T-cell (primary cell): ENCODE measurements at regions of chr12 and their contacts with region 1.

Region 1: GRCh38 chr12:92593734-92594402 is 108.9 kb upstream of the PLEKHG7 start:
- DNase-seq: peak; percentile 40 to 95 (median 82)
- ATAC-seq: peak; percentile 92 to 94 (median 92)
- H3K4me3 ChIP-seq: peak overlapping the region in 1 of 2 donors; percentile 5
- H3K4me3 Mint-ChIP-seq: peak overlapping the region; percentile 37 to 42 (median 40)
- H3K27ac ChIP-seq: peak overlapping the region; percentile 98
- H3K27ac Mint-ChIP-seq: peak overlapping the region; percentile 97 to 99
- H3K4me1 ChIP-seq: peaks cover 4 to 27% of the 10 kb centered on the region in 2 experiments
- H3K4me1 Mint-ChIP-seq: peaks cover 41 to 81% (median 76%) of the 10 kb centered on the region in 3 donors
- H3K27me3 ChIP-seq: no peaks in the 10 kb centered on the region
- H3K27me3 Mint-ChIP-seq: no peaks in the 10 kb centered on the region

Region 2: DNA sequence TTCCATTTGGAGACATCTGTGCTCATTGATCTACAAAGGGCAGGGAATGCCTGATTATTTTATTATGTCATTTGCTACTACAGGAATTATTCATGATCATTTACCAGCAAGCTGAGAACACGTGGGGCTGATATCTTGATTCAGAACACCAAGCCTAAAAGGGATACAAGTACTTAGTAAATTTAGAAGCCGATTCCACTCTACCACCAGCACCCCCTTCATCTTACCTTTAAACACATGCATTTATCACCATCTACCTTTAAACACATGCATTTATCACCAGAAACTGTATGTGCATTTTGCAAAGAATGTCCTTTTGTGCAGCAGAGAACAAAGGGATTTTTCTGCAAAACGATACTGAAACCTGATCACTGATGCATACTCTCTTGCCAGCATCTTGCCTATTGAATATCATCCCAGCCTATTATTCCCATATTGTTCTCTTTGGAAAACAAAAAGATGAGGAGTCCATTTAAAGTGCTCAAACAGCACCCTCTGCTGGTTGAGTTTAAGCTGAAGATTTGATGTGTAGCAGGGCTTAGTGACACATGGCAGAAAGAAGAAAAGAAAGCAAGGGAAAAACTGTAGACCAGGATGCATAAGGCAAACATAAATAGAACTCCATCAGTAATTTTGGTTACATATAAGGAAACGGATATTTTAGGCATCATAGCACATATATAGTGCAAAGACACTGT is 23.7 kb before region 1 on chr12:
- CTCF ChIA-PET with region 1: interaction called in 1 of 2 experiments, 14 read pairs
- POLR2A ChIA-PET with region 1: interaction called, 3 to 4 read pairs
- DNase-seq: peak in 28 of 35 experiments; percentile 10 to 85 (median 34)
- ATAC-seq: peak; percentile 85 to 95 (median 92)
- H3K4me3 ChIP-seq: peak overlapping the region in 1 of 2 donors; percentile 2
- H3K4me3 Mint-ChIP-seq: no peak overlapping the region
- H3K27ac ChIP-seq: peak overlapping the region; percentile 25
- H3K27ac Mint-ChIP-seq: no peak overlapping the region
- H3K4me1 ChIP-seq: peaks cover 0 to 9% of the 10 kb centered on the region in 2 experiments
- H3K4me1 Mint-ChIP-seq: peaks cover 5 to 35% (median 26%) of the 10 kb centered on the region in 3 donors
- H3K27me3 ChIP-seq: no peaks in the 10 kb centered on the region
- H3K27me3 Mint-ChIP-seq: no peaks in the 10 kb centered on the region

Region 3: GRCh38 chr12:92608151-92609091 is 14.6 kb after region 1 on chr12:
- CTCF ChIA-PET with region 1: interaction called in 1 of 2 experiments, 11 read pairs
- POLR2A ChIA-PET with region 1: interaction called in 1 of 2 experiments, 8 read pairs
- DNase-seq: peak in 1 of 35 experiments; percentile 61
- ATAC-seq: peak in 2 of 4 experiments; percentile 30 to 46
- H3K4me3 ChIP-seq: no peak overlapping the region
- H3K4me3 Mint-ChIP-seq: peak overlapping the region in 1 of 3 donors; percentile 72
- H3K27ac ChIP-seq: no peak overlapping the region
- H3K27ac Mint-ChIP-seq: peak overlapping the region in 1 of 2 donors; percentile 57
- H3K4me1 ChIP-seq: no peaks in the 10 kb centered on the region
- H3K4me1 Mint-ChIP-seq: peaks cover 10 to 21% (median 20%) of the 10 kb centered on the region in 3 donors
- H3K27me3 ChIP-seq: no peaks in the 10 kb centered on the region
- H3K27me3 Mint-ChIP-seq: no peaks in the 10 kb centered on the region

Region 4: GRCh38 chr12:92661269-92661668 is 67.4 kb after region 1 on chr12:
- CTCF ChIA-PET with region 1: no interaction called
- POLR2A ChIA-PET with region 1: no interaction called
- DNase-seq: no peak
- ATAC-seq: no peak
- H3K4me3 ChIP-seq: no peak overlapping the region
- H3K4me3 Mint-ChIP-seq: no peak overlapping the region
- H3K27ac ChIP-seq: no peak overlapping the region
- H3K27ac Mint-ChIP-seq: no peak overlapping the region
- H3K4me1 ChIP-seq: no peaks in the 10 kb centered on the region
- H3K4me1 Mint-ChIP-seq: no peaks in the 10 kb centered on the region
- H3K27me3 ChIP-seq: no peaks in the 10 kb centered on the region
- H3K27me3 Mint-ChIP-seq: peaks cover 0 to 3% of the 10 kb centered on the region in 2 donors

Region 5: GRCh38 chr12:92690601-92691000 is 96.7 kb after region 1 on chr12:
- CTCF ChIA-PET with region 1: no interaction called
- POLR2A ChIA-PET with region 1: no interaction called
- DNase-seq: no peak
- ATAC-seq: no peak
- H3K4me3 ChIP-seq: no peak overlapping the region
- H3K4me3 Mint-ChIP-seq: no peak overlapping the region
- H3K27ac ChIP-seq: no peak overlapping the region
- H3K27ac Mint-ChIP-seq: no peak overlapping the region
- H3K4me1 ChIP-seq: no peaks in the 10 kb centered on the region
- H3K4me1 Mint-ChIP-seq: no peaks in the 10 kb centered on the region
- H3K27me3 ChIP-seq: no peaks in the 10 kb centered on the region
- H3K27me3 Mint-ChIP-seq: peaks cover 6 to 11% of the 10 kb centered on the region in 2 donors

Region 6: GRCh38 chr12:92735131-92735721 is 141.4 kb after region 1 on chr12:
- CTCF ChIA-PET with region 1: no interaction called
- POLR2A ChIA-PET with region 1: no interaction called
- DNase-seq: no peak
- ATAC-seq: no peak
- H3K4me3 ChIP-seq: no peak overlapping the region
- H3K4me3 Mint-ChIP-seq: no peak overlapping the region
- H3K27ac ChIP-seq: no peak overlapping the region
- H3K27ac Mint-ChIP-seq: no peak overlapping the region
- H3K4me1 ChIP-seq: no peaks in the 10 kb centered on the region
- H3K4me1 Mint-ChIP-seq: peaks cover 3 to 20% (median 12%) of the 10 kb centered on the region in 3 donors
- H3K27me3 ChIP-seq: peaks cover 0 to 4% of the 10 kb centered on the region in 2 experiments
- H3K27me3 Mint-ChIP-seq: peaks cover 3 to 4% of the 10 kb centered on the region in 2 donors